A549 (cell line): ENCODE measurements at regions of chr5 and their contacts with region 1.

Region 1: DNA sequence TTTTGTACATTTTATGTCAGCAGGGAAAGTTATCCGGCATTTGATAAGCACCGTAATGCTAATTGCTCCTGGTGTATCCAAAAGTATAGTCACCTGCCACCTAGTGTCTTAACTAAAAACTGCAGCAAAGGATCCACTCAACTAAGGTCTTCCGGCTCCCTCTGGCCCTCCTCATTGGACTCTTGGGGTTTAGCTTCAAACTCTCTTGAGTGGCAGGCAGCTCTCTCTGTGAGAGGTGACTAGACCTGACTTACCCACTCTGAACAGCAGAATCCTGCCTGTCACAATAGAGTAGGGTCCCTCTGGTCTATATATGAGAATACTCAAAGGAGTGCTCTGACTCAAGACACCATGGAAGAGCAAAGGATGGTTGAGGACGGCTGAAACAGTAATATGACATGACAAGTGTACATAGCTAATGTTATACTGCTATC is 60.3 kb upstream of the CAST start:
- DNase-seq: peak; percentile 68 to 75
- ATAC-seq: peak; percentile 88 to 96
- H3K4me3 ChIP-seq: no peak overlapping the region
- H3K27ac ChIP-seq: peak overlapping the region; percentile 62 to 75
- H3K4me1 ChIP-seq: 0 out of 3 replicates have a peak, but pooled peaks cover 13% of the 10 kb centered on the region
- CTCF ChIP-seq: peak; percentile 85
- EP300 ChIP-seq: no peak
- POLR2A ChIP-seq: no peak
- RAD21 ChIP-seq: peak; percentile 86 to 89

Region 2: GRCh38 chr5:96142786-96143434 is 458.9 kb before region 1 on chr5:
- CTCF ChIA-PET with region 1: no interaction called
- POLR2A ChIA-PET with region 1: no interaction called
- DNase-seq: no peak
- ATAC-seq: no peak
- H3K4me3 ChIP-seq: no peak overlapping the region
- H3K27ac ChIP-seq: peak overlapping the region in 1 of 2 experiments; percentile 54; a peak in 2 of 6 replicates
- H3K4me1 ChIP-seq: peaks cover 23% of the 10 kb centered on the region
- CTCF ChIP-seq: no peak
- EP300 ChIP-seq: no peak
- POLR2A ChIP-seq: no peak
- RAD21 ChIP-seq: no peak

Region 3: DNA sequence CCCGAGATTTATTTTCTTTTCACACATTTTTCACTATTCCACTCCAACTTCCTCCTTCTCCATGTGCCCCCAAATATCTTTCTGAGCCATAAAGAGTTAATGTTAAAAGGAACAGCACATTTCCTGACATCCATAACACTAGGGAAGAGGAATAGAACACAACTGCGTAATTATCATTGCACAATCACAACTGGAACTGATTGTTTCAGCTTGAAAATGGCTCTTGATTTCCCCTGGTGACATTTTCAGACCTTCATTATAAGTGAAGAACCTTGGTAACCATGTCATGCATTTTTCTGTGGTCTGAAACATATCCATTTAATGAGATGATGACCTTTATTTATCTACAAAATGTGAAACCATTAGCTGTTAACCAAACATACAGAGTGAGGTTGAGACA is 251.2 kb before region 1 on chr5:
- CTCF ChIA-PET with region 1: interaction called, 317 read pairs
- POLR2A ChIA-PET with region 1: no interaction called
- DNase-seq: no peak
- ATAC-seq: no peak
- H3K4me3 ChIP-seq: no peak overlapping the region
- H3K27ac ChIP-seq: no peak overlapping the region; a peak in 1 of 6 replicates
- H3K4me1 ChIP-seq: peaks cover 13% of the 10 kb centered on the region
- CTCF ChIP-seq: no peak
- EP300 ChIP-seq: no peak
- POLR2A ChIP-seq: no peak
- RAD21 ChIP-seq: no peak

Region 4: DNA sequence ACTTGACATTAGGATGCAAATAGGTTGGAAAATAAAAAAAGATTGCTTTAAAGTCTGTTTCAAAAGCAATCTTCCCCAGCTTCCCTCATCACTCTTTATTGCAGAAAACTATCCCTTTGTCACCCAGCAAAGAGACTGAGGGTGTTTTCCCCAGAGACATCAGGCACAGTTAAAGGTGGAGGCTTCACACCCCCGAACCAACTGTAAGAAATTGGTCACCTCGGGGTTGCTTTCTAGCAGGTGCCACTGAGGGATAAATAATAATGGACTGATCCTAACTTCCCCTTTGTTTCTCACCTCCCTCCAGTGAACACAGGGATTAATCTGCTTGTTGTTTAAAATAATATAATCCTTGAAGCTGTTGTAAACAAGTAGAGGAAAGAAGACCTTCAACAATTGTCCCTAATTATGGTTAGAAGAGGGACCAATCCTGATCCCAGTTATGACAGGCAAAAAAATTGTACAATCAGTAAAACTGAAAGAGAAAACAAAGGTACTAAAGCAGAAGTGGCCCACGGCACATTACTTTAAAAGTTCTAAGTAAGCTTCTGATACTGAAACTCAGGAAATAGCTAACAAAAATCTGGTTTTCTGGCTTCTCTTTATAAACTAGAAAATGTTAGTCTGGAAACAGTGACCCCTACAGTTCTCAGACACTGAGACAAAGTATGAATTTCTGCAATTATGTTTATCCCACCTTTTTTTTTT is 162.2 kb before region 1 on chr5:
- CTCF ChIA-PET with region 1: interaction called, 12 read pairs
- POLR2A ChIA-PET with region 1: no interaction called
- DNase-seq: no peak
- ATAC-seq: no peak
- H3K4me3 ChIP-seq: no peak overlapping the region
- H3K27ac ChIP-seq: no peak overlapping the region
- H3K4me1 ChIP-seq: no peaks in the 10 kb centered on the region; the same call in 2 of the 3 replicates
- CTCF ChIP-seq: peak; percentile 24
- EP300 ChIP-seq: no peak
- POLR2A ChIP-seq: no peak
- RAD21 ChIP-seq: no peak; a peak in 1 of 5 replicates

Region 5: GRCh38 chr5:96590797-96591196 is 11.0 kb before region 1 on chr5:
- CTCF ChIA-PET with region 1: interaction called, 28 read pairs
- POLR2A ChIA-PET with region 1: no interaction called
- DNase-seq: no peak
- ATAC-seq: no peak
- H3K4me3 ChIP-seq: no peak overlapping the region
- H3K27ac ChIP-seq: no peak overlapping the region
- H3K4me1 ChIP-seq: peaks cover 14% of the 10 kb centered on the region; the same call in 2 of the 3 replicates
- CTCF ChIP-seq: no peak
- EP300 ChIP-seq: no peak
- POLR2A ChIP-seq: no peak
- RAD21 ChIP-seq: no peak

Region 6: DNA sequence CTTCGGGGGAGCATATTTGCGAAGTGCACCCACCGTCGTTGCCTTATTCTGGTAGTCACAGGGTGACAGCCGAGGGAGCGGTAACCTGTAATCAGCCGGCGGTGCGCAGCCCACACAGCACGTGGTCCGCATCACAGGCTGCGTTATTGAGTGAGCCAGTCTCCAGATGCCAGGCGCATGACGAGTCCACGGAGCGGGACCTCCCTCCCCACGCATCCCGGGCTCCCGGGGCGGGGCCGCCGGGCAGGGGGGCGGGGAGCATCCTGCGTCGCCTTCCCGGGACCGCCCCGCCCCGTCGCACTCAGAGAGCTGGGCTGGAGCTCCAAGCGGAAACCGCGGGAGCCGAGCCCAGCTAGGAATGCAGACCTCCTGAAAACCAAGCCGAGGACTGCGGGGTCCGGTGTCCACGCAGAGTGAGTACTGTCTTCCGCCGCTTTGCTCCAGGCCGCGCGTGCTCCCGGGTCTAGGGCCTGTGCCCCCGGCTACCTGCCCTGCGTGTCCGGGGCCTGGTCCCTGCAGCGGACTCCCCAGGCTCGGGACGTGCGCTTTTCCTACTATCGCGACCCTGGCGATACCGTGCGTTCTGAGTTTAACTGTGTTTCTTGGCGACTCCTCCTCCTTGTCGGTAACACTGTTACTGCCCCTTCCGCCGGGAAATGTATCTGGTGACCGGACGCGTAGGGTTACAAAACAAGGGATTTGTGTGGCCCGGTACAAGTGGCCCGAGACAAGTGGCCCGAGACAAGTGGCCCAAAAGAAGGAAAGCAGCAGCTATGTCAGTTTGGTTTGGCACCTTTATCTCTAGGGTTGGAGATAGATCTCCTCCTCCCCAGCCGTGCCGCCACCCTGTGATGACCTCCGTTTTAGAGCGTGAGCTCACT is 100.9 kb after region 1 on chr5:
- CTCF ChIA-PET with region 1: interaction called, 12 read pairs
- POLR2A ChIA-PET with region 1: no interaction called
- DNase-seq: peak; percentile 81 to 94
- ATAC-seq: peak; percentile 95 to 98
- H3K4me3 ChIP-seq: peak overlapping the region; percentile 45
- H3K27ac ChIP-seq: peak overlapping the region; percentile 56 to 81
- H3K4me1 ChIP-seq: peaks cover 47% of the 10 kb centered on the region
- CTCF ChIP-seq: no peak
- EP300 ChIP-seq: no peak
- POLR2A ChIP-seq: no peak
- RAD21 ChIP-seq: no peak

Region 7: DNA sequence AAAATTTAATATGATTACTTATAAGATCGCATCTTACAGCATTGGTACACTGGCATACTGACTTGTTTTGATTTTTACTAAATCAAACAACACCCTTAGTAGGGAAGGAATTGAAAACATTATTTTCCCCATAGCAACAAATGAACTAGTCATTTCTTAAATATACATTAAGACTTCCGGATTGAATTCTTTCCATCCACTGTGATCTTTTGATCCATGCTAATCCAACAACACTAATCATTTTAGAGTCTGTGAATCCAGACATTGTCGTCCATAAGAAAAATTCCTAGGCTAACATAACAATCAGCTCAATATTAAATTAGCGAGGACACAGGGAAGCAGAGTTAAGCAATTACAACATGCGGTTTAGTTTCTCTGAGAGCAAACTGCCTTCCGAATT is 227.5 kb after region 1 on chr5:
- CTCF ChIA-PET with region 1: no interaction called
- POLR2A ChIA-PET with region 1: no interaction called
- DNase-seq: no peak
- ATAC-seq: no peak
- H3K4me3 ChIP-seq: no peak overlapping the region
- H3K27ac ChIP-seq: no peak overlapping the region
- H3K4me1 ChIP-seq: peaks cover under 1% of the 10 kb centered on the region; the same call in 2 of the 3 replicates
- CTCF ChIP-seq: no peak
- EP300 ChIP-seq: no peak
- POLR2A ChIP-seq: no peak
- RAD21 ChIP-seq: no peak

Region 8: DNA sequence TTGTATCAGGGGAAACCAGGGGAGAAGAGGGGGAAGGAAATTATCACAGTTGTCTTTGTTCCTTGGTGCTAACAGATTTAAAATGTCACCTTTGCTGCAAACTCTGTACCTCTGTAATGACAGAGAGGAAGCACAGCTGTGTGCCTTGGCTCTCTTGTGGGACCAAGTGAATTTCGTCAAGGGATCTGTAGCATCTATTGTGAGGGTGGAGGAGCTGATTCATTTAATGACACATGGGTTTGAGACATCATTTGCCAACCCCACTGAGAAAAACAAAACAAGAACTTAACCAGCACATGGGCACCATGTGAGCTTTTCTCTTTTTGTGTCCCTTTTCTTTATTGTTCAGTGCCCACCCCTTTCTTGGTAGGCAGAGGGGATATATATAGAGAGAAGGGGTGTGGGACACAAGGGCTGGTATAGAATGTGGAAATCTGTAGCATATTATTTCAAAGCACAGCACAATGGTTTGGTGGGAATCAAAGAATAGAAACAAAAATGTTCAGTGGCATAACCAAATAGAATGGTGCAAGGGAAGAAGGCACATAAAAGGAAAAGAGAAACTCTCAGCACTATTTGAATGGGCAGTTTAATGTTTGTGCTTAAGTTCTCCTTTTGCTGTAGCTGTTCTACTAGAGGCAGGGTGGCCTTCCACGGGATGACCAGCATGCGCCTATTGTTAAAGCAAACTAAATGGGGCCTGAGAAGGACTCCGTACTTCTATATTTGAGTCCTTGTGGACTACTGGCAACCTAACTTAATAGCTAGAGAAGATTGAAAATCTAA is 477.3 kb after region 1 on chr5:
- CTCF ChIA-PET with region 1: no interaction called
- POLR2A ChIA-PET with region 1: no interaction called
- DNase-seq: no peak
- ATAC-seq: no peak
- H3K4me3 ChIP-seq: no peak overlapping the region
- H3K27ac ChIP-seq: no peak overlapping the region
- H3K4me1 ChIP-seq: no peaks in the 10 kb centered on the region
- CTCF ChIP-seq: no peak
- EP300 ChIP-seq: no peak
- POLR2A ChIP-seq: no peak
- RAD21 ChIP-seq: no peak